Endothelial cell of umbilical vein (primary cell): ENCODE measurements at regions of chr1 and their contacts with region 1.

Region 1: DNA sequence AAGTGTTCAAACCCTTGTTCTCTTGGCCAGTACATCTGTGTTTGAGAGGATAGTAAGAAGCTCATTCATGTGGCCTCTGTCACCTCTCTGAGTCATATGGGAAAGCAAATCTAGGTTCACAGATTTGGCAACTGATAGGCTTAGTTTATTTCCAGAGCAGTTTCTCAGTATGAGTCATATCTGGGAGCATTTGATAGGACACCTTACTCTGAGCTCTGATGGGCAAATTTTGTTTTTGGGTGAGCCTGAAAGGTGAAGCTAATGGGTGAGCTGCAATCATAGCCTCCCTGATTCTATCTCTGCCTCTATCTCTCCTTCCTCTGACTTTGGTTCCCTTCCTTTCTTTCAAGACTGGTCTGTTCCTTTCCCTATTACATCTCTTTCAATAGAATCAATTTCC is 134.4 kb downstream of the S1PR1 start:
- DNase-seq: peak; percentile 74
- H3K4me3 ChIP-seq: no peak overlapping the region
- H3K27ac ChIP-seq: no peak overlapping the region
- H3K4me1 ChIP-seq: peaks cover 20% of the 10 kb centered on the region
- H3K27me3 ChIP-seq: no peaks in the 10 kb centered on the region
- CTCF ChIP-seq: no peak
- POLR2A ChIP-seq: no peak

Region 2: DNA sequence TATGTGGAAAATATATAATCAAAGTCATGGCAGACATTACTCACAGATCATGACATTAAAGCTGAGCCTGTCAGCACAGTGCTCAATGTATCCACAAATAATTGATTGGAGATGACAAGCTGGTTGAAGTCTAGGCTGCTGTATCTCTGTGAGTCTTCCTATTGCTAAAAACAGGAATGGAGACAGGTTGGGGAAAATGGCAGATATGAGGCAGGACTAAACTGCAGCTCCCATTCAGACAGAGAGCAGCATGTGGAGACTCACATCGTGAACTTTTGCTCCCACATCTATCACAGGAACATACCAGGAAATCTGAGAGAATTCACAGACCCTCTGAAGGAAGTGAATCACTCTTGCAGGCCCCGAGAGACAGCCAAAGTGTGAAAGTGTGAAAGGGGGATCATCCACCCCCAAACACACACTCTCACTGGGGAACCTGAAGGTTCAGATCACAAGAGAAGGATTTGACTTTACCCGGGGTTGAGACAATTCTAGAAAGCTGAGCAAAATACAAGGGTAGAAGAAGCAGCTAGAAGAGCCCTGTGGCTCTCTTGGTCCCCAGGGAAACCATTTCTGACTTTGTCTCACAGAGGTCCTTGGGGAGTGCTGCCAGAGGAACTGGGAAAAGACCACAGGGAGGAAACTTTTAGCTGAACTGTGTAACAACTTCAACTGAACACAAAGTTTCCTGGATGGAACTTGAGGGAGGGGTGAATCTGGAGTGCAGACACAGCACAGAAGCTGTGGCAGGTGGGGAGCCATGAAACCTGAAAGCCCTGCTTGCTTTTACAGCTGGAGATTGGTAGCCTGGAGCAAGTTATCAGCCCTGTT is 39.0 kb after region 1 on chr1:
- CTCF ChIA-PET with region 1: interaction called, 5 read pairs
- POLR2A ChIA-PET with region 1: no interaction called
- dilution Hi-C with region 1: no loop called
- intact Hi-C with region 1: loop called (anchors 2 kb)
- DNase-seq: peak; percentile 88
- H3K4me3 ChIP-seq: peak overlapping the region in 1 of 3 experiments; percentile 33
- H3K27ac ChIP-seq: peak overlapping the region; percentile 69
- H3K4me1 ChIP-seq: peaks cover 19% of the 10 kb centered on the region
- H3K27me3 ChIP-seq: no peaks in the 10 kb centered on the region
- CTCF ChIP-seq: no peak
- POLR2A ChIP-seq: no peak